PC-3 (cell line): ENCODE measurements at regions of chr19 and their contacts with region 1.

Region 1: GRCh38 chr19:18521885-18522624 is at the start of gene ELL:
- DNase-seq: peak; percentile 100
- ATAC-seq: peak; percentile 85
- H3K4me3 ChIP-seq: peak within 1 kb of the TSS; percentile 100
- H3K27ac ChIP-seq: peak within 1 kb of the TSS; percentile 90
- H3K4me1 ChIP-seq: peaks cover 26% of the 10 kb centered on the region
- H3K27me3 ChIP-seq: no peaks in the 10 kb centered on the region
- CTCF ChIP-seq: no peak
- total RNA-seq, gene ELL: 21.0 and 30.6 TPM in 2 replicates

Region 2: DNA sequence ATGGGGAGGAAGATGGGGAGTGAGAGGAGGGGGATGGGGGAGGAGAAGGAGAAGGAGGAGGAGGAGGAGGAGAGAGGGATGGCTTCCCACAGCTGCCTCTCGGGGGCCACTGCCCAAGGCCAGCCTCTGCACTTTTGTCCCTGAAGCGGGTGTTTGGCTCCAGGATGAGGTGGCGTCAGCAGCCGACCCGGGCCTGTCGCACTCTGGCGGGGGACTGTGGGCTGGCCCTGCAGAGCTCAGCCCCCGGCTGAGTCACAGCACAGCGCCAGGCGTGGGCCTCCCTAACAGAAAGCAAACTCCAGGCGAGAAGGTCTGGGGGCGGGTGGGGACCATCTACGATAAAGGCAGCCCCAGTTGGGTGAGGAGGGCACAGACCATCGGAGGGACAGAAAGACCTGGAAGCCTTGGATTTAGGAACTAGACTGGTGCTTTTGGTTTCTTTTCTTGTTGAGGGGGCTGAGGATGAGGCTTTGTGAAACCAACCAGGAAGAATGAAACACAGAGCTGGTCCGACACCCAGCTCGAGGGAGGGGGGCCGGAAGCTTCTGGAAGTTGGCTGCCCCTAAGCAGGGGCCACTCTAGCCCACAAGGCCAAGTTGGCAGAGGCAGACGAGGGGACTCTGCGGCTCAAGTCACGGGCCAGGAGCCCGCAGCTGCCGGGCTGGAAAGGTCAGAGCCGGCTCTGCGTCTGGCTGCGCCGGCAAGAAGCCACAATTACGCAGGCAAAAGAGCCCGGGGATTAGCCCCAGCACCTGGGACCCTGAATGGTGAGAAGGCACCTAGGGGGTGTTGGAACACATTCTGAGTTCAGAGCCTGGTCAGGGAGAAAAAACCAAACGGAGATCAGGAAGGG is 217.4 kb before region 1 on chr19:
- CTCF ChIA-PET with region 1: no interaction called
- POLR2A ChIA-PET with region 1: no interaction called
- intact Hi-C with region 1: no loop called
- DNase-seq: peak; percentile 34
- ATAC-seq: peak; percentile 66
- H3K4me3 ChIP-seq: no peak overlapping the region
- H3K27ac ChIP-seq: no peak overlapping the region
- H3K4me1 ChIP-seq: peaks cover 19% of the 10 kb centered on the region
- H3K27me3 ChIP-seq: no peaks in the 10 kb centered on the region
- CTCF ChIP-seq: no peak

Region 3: DNA sequence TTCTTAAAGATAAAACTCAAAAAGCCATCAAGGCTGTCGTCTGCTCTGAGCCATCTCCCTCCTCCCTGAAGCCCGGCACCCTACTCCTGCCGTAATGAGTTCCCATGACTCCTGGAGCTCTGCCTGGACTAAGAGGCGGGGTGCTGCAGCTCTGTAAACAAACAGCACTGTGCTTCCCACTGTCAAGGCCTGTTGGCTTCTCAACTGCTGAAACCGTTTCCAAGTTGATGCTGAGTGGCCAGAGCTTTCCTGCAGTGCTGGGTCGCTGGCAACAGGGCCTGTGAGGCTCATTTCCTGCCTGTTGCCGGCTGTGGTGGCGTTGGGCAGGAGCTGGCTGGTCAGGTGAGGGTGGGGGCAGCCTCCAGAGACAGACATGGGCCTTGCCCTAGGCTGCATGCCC is 57.4 kb before region 1 on chr19:
- CTCF ChIA-PET with region 1: no interaction called
- POLR2A ChIA-PET with region 1: interaction called, 3 read pairs
- intact Hi-C with region 1: loop called (anchors 5 kb)
- DNase-seq: peak; percentile 49
- ATAC-seq: peak; percentile 49
- H3K4me3 ChIP-seq: no peak overlapping the region
- H3K27ac ChIP-seq: peak overlapping the region; percentile 14; the same call in 1 of the 2 replicates
- H3K4me1 ChIP-seq: peaks cover 41% of the 10 kb centered on the region
- H3K27me3 ChIP-seq: no peaks in the 10 kb centered on the region
- CTCF ChIP-seq: no peak

Region 4: DNA sequence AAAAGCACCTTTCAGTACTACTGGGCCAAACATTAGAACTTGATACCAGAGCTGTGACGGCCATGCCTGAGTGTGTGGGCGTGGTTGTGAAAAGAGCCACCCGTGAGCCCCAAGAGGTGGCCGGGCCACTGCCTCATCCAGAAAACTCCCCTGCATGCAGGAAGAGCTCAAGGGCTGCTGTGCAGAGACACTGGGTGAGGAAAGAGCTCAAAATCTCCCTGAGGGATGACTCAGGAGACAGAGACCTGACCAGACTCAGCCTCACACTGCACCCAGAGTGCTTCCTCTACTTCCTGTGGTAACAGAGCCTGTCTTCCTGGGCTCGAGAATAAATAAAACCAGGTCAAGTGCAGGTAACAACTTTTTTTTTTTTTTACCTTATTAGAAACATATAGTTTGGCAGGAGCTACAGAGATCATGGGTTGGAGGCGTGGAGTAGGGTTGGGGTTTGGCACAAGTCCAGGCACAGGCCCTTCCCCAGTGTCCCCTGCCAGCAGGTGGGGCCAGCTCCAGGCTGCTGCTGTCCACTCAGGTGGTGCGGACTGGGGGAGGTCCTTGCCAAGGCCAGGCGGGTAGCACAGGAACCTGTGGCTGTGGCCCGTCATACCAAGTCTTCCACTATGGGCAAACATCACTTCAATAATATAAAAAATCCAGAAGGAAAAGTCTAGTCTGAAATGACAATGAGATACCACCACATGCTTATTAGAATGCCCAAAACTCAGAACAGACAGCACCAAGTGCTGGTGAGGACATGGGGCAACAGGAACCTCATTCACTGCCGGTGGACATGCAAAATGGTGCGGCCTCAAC is 25.7 kb before region 1 on chr19:
- CTCF ChIA-PET with region 1: interaction called, 11 read pairs
- POLR2A ChIA-PET with region 1: interaction called, 6 read pairs
- intact Hi-C with region 1: no loop called
- DNase-seq: peak; percentile 82
- ATAC-seq: peak; percentile 95
- H3K4me3 ChIP-seq: 0 out of 2 replicates have a peak overlapping the region, but pooled peaks have one; percentile 8
- H3K27ac ChIP-seq: peak overlapping the region; percentile 52
- H3K4me1 ChIP-seq: peaks cover 19% of the 10 kb centered on the region
- H3K27me3 ChIP-seq: no peaks in the 10 kb centered on the region
- CTCF ChIP-seq: peak; percentile 39; the same call in 1 of the 2 replicates

Region 5: GRCh38 chr19:18636183-18636968 is 114.3 kb after region 1 on chr19:
- CTCF ChIA-PET with region 1: no interaction called
- POLR2A ChIA-PET with region 1: no interaction called
- intact Hi-C with region 1: loop called (anchors 5 kb)
- DNase-seq: peak; percentile 94
- ATAC-seq: peak; percentile 90
- H3K4me3 ChIP-seq: peak overlapping the region; percentile 79
- H3K27ac ChIP-seq: no peak overlapping the region
- H3K4me1 ChIP-seq: peaks cover 12% of the 10 kb centered on the region
- H3K27me3 ChIP-seq: no peaks in the 10 kb centered on the region
- CTCF ChIP-seq: no peak